CD14-positive monocyte (primary cell): ENCODE measurements at regions of chr10 and their contacts with region 1.

Region 1: DNA sequence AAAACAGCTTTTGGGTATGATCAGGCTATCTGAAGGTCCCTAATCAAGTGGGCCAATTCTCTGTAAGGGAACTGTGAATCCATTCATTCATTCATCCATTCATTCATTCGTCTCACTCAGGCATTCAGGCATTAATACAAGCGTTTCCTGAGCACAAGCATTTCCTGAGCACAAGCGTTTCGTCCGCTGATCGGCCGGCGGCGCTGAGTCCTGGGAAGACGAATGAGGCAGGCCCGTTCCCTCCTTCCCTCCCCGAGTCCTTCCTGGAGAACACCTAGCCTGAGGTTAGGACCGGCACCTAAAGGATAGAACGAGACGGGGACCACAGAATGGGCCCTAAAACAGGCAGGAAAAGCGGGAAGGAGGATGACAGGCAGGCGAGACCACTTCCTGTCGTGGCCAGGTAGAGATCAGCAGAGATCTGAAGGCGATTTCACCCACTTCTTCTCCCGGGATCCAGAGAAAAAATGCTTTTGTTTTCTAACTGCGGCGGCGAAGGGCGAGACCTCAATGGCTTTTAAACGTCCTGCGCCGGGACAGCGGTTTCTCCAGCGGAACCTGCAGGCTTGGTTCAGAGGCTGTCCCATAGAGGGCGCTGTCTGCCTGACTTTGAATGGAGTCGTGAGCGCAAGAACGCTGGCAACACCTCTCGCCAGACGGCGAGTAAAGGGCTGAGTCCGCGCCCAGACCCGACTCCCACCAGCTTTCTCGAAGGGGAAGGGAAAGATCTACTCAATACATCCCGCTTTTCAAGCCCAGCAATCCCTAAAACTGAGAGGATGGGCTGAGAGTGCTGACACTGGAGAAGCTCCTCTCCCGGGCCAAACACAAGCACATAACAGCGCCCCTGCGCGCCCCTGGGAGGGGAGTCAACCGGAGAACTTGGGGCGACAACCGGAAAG is 2.9 kb upstream of the HMX3 start:
- DNase-seq: peak; percentile 55 to 70 (median 61)
- H3K4me3 ChIP-seq: no peak overlapping the region
- H3K4me3 Mint-ChIP-seq: peak overlapping the region in 1 of 2 donors; percentile 85
- H3K27ac ChIP-seq: no peak overlapping the region
- H3K27ac Mint-ChIP-seq: no peak overlapping the region
- H3K4me1 ChIP-seq: peaks cover 7 to 38% of the 10 kb centered on the region in 2 donors
- H3K4me1 Mint-ChIP-seq: peaks cover 32% of the 10 kb centered on the region
- H3K27me3 ChIP-seq: peaks cover 80 to 94% of the 10 kb centered on the region in 2 donors
- H3K27me3 Mint-ChIP-seq: peaks cover 71 to 92% (median 78%) of the 10 kb centered on the region in 3 donors
- CTCF ChIP-seq: peak; percentile 94

Region 2: GRCh38 chr10:123559066-123559822 is 426.4 kb after region 1 on chr10:
- intact Hi-C with region 1: loop called (anchors 1 to 2 kb)
- DNase-seq: peak; percentile 45 to 62 (median 50)
- H3K4me3 ChIP-seq: no peak overlapping the region
- H3K4me3 Mint-ChIP-seq: no peak overlapping the region
- H3K27ac ChIP-seq: no peak overlapping the region
- H3K27ac Mint-ChIP-seq: no peak overlapping the region
- H3K4me1 ChIP-seq: no peaks in the 10 kb centered on the region
- H3K4me1 Mint-ChIP-seq: no peaks in the 10 kb centered on the region
- H3K27me3 ChIP-seq: no peaks in the 10 kb centered on the region
- H3K27me3 Mint-ChIP-seq: peaks cover 13 to 17% (median 15%) of the 10 kb centered on the region in 3 donors
- CTCF ChIP-seq: peak; percentile 99

Region 3: DNA sequence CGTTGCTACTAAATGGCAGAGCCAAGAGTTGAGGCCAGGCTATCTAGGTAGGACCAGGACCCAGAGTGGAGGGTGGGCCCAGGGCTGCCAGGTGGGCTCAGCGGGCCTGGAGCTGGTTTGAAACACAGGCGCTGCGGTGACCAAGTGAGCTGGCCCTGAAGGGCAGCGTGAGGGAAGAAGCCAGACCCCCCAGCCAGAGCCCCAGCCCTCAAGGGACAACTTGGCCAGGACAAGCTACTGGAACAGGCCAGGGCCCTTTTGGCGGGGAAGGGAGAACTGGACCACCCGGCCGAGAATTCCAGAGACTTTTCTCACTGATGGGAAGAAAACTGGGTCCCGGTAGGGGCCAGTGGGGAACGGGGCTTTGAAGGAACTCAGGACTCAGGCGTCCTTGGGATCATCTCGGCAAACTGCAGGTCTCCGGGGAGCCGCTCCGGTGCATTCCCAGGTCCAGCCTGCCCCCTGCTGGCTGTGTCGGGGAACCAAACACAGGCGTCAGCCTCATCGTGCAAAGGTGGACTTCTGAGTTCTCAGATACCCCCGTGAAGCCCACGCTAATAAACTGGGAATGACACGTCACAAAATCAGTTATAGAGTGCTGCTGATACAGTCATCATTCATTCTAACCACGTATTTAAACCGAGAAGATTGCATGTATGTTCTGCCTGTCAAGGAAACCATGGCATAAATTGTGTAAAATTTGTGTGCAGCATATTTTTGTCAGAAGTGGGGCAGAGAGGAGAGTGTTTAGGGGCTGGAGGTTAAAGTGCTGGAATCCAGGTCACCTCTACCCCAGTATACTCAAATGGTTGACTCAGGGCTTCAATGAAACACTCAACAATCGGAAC is 834.8 kb after region 1 on chr10:
- intact Hi-C with region 1: loop called in 1 of 2 experiments (anchors 10 kb)
- DNase-seq: peak; percentile 13 to 44 (median 31)
- H3K4me3 ChIP-seq: no peak overlapping the region
- H3K4me3 Mint-ChIP-seq: no peak overlapping the region
- H3K27ac ChIP-seq: no peak overlapping the region
- H3K27ac Mint-ChIP-seq: no peak overlapping the region
- H3K4me1 ChIP-seq: no peaks in the 10 kb centered on the region
- H3K4me1 Mint-ChIP-seq: no peaks in the 10 kb centered on the region
- H3K27me3 ChIP-seq: peaks cover 8 to 43% of the 10 kb centered on the region in 2 donors
- H3K27me3 Mint-ChIP-seq: peaks cover 40 to 79% (median 61%) of the 10 kb centered on the region in 3 donors
- CTCF ChIP-seq: peak; percentile 91